Right ventricle myocardium inferior (tissue), 1 donor: ENCODE measurements at regions of chr7 and their contacts with region 1.

Region 1: DNA sequence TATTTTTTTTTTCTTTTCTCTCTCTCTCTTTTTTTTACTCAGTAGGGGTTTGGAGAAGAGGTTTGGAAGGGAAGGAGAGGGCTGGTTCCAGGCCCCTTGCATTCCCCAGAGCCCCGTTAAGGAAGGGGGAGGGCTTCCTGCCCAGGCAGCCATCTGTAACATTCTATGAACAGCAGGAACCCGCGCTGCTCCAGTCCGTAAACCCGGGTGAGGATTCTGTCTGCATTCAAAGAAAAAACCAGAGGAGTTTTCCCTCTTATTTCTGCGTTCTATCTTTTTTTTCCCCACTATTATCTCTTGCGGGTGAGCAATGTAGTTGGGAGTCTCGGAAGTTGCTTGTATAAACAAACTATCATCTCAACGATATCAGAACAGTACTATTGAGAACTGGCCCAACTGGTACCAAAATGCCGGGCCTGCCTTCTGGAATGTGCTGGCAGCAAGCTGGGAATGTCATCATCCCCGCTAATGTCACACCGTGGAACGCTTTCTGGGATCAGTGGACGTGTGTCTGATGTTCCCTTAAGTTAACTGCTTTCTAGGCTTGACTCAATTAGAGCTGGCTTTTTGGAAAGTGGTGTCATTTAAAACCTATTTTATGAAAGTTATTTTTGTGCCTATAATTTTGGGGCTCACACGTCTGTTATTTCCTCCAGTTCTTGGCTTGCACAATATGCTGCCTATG is 153.1 kb upstream of the MEOX2 start:
- DNase-seq: peak; percentile 81
- ATAC-seq: peak; percentile 98

Region 2: GRCh38 chr7:15778191-15778590 is 61.4 kb before region 1 on chr7:
- intact Hi-C with region 1: loop called (anchors 5 kb)
- DNase-seq: no peak
- ATAC-seq: no peak